ENCODE measurements at regions of chr2 and their contacts with region 1.

Region 1: DNA sequence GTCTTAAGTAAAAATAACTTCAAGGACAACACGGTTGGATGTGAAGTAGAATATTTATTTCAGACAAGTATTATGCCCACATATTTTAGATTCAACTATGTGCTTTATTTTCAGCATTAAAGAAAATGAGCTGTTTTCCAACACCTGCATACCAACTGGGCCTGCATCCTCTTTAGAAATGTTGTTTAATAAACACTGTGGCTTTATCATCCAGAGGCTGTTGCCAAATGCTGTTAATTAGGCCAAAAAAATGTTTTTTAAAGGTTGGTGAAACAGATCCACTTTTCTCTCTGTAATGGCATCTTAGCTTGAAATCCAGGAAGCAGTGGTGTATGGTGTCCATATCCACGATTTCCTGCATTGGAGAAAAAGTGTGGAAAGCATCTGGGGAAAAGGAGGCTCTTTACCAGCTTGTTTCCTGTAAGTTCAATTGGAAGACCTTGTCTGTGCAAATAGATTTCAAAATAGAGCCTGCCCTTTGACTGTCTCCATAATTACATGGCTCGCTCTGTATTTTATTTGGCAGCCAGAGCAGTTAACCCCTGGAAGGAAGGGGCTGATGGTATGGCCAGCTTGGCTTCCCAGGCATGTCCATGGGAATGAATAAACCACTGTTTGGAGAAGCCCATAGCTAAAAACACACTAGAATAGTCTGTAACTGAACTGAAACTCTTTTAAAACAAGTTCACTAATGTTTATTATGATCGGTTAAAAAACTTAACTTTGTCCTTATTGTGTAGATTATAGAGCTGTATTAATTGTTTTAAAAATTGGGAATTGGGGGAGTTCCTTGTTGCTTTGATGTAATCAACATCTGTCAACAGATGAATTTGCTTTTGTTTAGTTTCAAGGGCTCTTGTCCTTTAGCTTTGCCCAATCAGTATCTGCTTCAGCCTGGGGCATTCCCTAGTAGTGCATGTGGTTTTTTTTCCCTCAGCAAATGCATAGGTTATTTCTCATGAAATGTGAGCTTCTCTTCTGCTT is 33.0 kb upstream of the DLX1 start:
- DNase-seq: peak; percentile 87
- H3K4me3 ChIP-seq: no peak overlapping the region
- H3K27ac ChIP-seq: no peak overlapping the region
- H3K4me1 ChIP-seq: peaks cover 10% of the 10 kb centered on the region
- H3K27me3 ChIP-seq: no peaks in the 10 kb centered on the region
- CTCF ChIP-seq: no peak
- POLR2A ChIP-seq: no peak

Region 2: GRCh38 chr2:171963198-171963597 is 89.1 kb before region 1 on chr2:
- CTCF ChIA-PET with region 1: no interaction called
- POLR2A ChIA-PET with region 1: no interaction called
- dilution Hi-C with region 1: no loop called
- intact Hi-C with region 1: loop called (anchors 5 kb)
- DNase-seq: no peak
- H3K4me3 ChIP-seq: no peak overlapping the region
- H3K27ac ChIP-seq: no peak overlapping the region
- H3K4me1 ChIP-seq: no peaks in the 10 kb centered on the region
- H3K27me3 ChIP-seq: no peaks in the 10 kb centered on the region
- CTCF ChIP-seq: no peak
- POLR2A ChIP-seq: no peak